Naive thymus-derived CD4-positive, alpha-beta T cell (primary cell): ENCODE measurements at regions of chr6 and their contacts with region 1.

Region 1: GRCh38 chr6:132279592-132280139 is 121.6 kb downstream of the MOXD1 start:
- DNase-seq: peak; percentile 43 to 79 (median 71)
- ATAC-seq: peak; percentile 89
- H3K4me3 ChIP-seq: peak overlapping the region; percentile 63
- H3K4me3 Mint-ChIP-seq: peak overlapping the region in 9 of 10 donors; percentile 56 to 89 (median 84)
- H3K27ac ChIP-seq: no peak overlapping the region
- H3K27ac Mint-ChIP-seq: no peak overlapping the region
- H3K4me1 ChIP-seq: no peaks in the 10 kb centered on the region
- H3K4me1 Mint-ChIP-seq: no peaks in the 10 kb centered on the region
- H3K27me3 ChIP-seq: no peaks in the 10 kb centered on the region
- H3K27me3 Mint-ChIP-seq: peaks cover 19 to 38% (median 27%) of the 10 kb centered on the region in 5 donors

Region 2: DNA sequence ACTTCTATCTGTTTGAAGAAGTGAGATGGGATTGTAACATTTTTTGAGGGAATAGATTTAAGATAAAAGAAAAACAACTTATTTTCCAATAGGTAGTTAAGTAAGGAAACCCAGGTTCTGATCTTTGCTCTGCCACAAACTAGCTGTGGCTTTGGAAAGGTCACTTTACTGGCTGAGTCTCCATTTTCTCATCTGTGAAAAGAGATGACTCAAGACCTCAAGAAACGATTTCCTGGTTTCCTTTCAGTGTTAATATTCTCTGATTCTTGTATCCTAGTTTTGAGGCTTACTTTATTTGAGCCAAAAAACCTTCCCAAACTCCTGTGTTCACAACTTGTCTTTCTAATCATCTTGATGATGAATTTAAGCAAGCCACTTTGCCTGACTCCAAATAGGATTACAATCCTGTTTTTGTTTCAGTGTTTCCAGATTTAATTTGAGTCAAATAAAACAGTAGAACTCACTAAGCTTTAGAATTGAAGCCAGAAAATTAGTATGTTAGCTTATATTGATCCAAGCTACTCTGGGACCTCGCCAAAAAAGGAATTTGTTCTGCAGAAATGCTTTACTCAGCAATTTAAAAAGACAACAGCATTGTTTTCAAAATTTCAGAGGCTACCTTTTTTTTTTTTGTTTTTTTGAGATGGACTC is 420.8 kb before region 1 on chr6:
- CTCF ChIA-PET with region 1: no interaction called
- POLR2A ChIA-PET with region 1: no interaction called
- intact Hi-C with region 1: no loop called
- DNase-seq: no peak
- ATAC-seq: no peak
- H3K4me3 ChIP-seq: no peak overlapping the region
- H3K4me3 Mint-ChIP-seq: no peak overlapping the region
- H3K27ac ChIP-seq: no peak overlapping the region
- H3K27ac Mint-ChIP-seq: no peak overlapping the region
- H3K4me1 ChIP-seq: no peaks in the 10 kb centered on the region
- H3K4me1 Mint-ChIP-seq: peaks cover 0 to 2% (median 0%) of the 10 kb centered on the region in 7 donors
- H3K27me3 ChIP-seq: peaks cover 0 to 3% of the 10 kb centered on the region in 2 donors
- H3K27me3 Mint-ChIP-seq: peaks cover 0 to 25% (median 7%) of the 10 kb centered on the region in 5 donors

Region 3: GRCh38 chr6:132300323-132300949 is 20.8 kb after region 1 on chr6:
- CTCF ChIA-PET with region 1: interaction called, 40 read pairs
- POLR2A ChIA-PET with region 1: no interaction called
- intact Hi-C with region 1: loop called (anchors 1 kb)
- DNase-seq: peak in 1 of 9 donors; percentile 11
- ATAC-seq: no peak
- H3K4me3 ChIP-seq: no peak overlapping the region
- H3K4me3 Mint-ChIP-seq: no peak overlapping the region
- H3K27ac ChIP-seq: no peak overlapping the region
- H3K27ac Mint-ChIP-seq: no peak overlapping the region
- H3K4me1 ChIP-seq: no peaks in the 10 kb centered on the region
- H3K4me1 Mint-ChIP-seq: peaks cover 0 to 1% (median 0%) of the 10 kb centered on the region in 7 donors
- H3K27me3 ChIP-seq: no peaks in the 10 kb centered on the region
- H3K27me3 Mint-ChIP-seq: peaks cover 13 to 23% (median 19%) of the 10 kb centered on the region in 5 donors